Kidney (tissue), 22 donors: ENCODE measurements at regions of chr9 and their contacts with region 1.

Region 1: DNA sequence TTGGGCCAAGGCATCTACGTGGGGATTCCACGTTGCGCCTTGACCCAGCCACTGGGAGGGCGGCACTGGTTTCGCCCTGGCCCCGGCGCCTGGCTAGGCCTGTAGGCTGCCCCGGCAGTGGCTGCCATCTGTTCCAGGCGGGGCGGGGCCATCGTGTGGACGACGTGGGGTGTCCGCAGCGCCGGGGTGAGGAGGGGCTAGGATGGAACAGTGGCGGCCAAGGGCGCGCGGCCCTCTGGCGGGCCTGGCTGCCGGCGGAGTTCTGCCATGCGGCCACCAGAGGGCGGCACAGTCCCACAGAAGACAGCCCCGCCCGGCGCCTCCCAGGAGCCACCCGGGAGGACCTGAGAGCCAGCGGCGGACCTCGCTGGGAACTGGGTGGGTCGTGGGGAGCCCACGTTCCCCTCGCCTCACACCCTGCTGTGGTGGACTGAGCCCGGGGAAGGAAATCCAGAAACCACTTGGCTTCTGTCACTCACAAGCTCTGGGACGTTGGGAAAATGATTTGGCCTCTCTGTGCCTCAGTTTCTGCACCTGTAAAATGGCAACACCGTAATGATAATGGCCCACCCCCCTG is 22.6 kb upstream of the RAPGEF1 start:
- DNase-seq: peak; percentile 53 to 88 (median 80)
- H3K4me3 ChIP-seq: no peak overlapping the region
- H3K27ac ChIP-seq: no peak overlapping the region
- H3K4me1 ChIP-seq: peaks cover 0 to 2% (median 0%) of the 10 kb centered on the region in 3 donors
- H3K27me3 ChIP-seq: no peaks in the 10 kb centered on the region
- CTCF ChIP-seq: peak; percentile 89

Region 2: GRCh38 chr9:132235946-132236661 is 473.7 kb after region 1 on chr9:
- intact Hi-C with region 1: loop called (anchors 10 kb)
- DNase-seq: peak in 4 of 5 donors; percentile 83 to 86 (median 84)
- H3K4me3 ChIP-seq: no peak overlapping the region
- H3K27ac ChIP-seq: no peak overlapping the region
- H3K4me1 ChIP-seq: peaks cover 0 to 3% (median 0%) of the 10 kb centered on the region in 3 donors
- H3K27me3 ChIP-seq: no peaks in the 10 kb centered on the region
- CTCF ChIP-seq: peak; percentile 88

Region 3: DNA sequence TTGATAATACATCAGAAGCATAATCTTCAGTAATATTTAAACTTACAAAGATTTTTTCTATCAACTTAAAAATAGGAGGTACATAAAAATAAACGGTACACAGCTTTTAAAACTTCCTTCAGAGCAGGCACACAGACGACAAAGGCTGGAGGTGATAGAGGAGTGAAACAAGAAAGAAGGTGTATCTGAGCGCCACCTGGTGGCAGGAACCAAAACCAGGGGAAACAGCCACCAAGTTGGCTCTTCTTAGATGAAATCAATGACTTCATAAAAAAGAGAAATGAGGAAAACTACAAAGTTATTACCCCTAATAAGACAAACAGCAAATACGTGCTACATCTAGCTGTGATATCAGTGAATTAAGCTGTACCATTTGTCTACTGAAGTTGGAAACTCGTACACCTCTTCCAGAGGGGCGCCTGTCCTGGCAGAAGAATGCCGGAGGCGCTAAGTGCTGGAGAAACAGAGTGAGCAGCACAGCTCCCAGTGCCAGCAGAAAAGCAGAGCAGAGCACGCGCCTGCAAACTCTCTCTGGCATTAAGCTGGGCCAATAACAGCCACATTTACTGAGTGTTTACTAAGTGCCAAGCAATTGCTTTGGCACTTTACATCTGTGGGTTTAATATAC is 506.4 kb after region 1 on chr9:
- intact Hi-C with region 1: loop called (anchors 10 kb)
- DNase-seq: peak in 4 of 5 donors; percentile 67 to 82 (median 72)
- H3K4me3 ChIP-seq: no peak overlapping the region
- H3K27ac ChIP-seq: no peak overlapping the region
- H3K4me1 ChIP-seq: no peaks in the 10 kb centered on the region
- H3K27me3 ChIP-seq: no peaks in the 10 kb centered on the region
- CTCF ChIP-seq: peak; percentile 77